ENCODE measurements at regions of chr2 and their contacts with region 1.

Region 1: DNA sequence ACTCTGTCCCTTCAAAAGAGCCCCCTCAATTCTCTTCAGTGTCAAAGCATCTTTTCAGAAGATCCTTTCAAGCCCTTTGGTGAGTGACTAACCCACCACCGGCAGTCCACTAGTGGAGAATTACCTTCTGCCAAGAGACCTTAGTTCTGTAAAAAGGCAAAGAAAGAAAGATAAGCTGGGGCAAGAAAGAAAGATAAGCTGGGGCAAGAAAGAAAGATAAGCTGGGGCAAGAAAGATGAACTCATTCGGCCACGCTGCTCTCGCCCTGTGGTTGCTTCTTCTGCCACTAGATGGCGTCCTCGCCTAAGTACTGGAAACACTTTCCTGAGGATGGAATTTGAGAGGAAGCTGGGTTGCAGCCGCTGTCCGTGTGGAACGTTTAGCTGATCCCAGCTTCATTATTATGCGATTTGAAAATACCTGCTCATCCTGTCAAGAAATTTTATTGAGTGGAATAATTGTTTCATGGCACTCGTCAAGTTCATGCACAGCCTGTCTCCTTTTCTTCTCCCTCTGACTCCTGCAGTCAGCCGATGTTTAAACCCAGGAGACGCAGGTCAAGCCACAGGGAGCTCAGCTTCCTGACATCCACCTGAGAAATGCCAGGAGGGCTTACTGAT is 17.3 kb upstream of the ANXA4 start:
- DNase-seq: no peak
- ATAC-seq: peak; percentile 98
- H3K4me3 ChIP-seq: peak overlapping the region; percentile 69; the same call in 1 of the 2 replicates
- H3K27ac ChIP-seq: no peak overlapping the region
- H3K4me1 ChIP-seq: no peaks in the 10 kb centered on the region; the same call in 1 of the 2 replicates
- H3K27me3 ChIP-seq: no peaks in the 10 kb centered on the region
- CTCF ChIP-seq: peak; percentile 81 to 85 (median 82)
- EP300 ChIP-seq: no peak
- POLR2A ChIP-seq: no peak
- RAD21 ChIP-seq: peak; percentile 94

Region 2: DNA sequence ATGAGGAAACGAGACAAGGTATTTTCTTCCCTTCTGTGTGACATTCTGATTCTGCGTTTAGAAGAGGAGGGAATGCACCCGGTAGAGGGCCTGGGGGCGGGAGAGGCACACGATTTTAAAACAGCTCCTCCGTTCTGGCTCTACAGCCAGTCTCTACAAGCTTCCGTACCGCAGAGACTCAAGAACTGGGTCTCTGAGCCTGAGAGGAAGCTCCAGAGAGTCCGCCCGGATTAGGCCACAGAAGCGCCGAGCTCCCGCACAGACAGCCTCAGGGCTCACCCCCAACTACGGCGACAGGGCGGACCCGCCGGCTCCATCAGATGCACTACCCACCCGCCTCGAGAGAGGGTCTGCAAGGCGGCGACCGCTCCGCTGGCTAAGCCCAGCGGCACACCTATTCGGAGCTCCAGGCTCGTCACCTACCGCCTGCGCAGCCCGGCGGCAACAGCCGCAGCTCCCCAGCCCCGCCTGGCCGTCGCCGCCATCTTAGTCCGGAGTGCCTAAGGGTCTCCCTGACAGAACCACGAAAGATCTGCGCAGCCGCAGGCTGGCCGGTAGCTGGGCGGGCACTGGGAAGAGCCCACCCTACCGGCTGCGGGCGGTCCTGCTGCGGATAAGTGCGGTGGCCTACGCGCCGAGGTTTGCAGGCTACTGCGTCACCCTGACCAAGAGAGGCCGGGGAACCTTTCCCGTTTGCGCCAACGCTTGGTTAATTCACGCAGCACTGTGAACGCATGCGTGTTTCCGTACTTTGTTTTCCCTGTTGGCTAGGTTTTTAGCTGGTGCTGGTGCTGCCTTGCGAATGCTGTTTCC is 287.5 kb before region 1 on chr2 and contains the start of gene NFU1:
- CTCF ChIA-PET with region 1: interaction called, 10 read pairs
- POLR2A ChIA-PET with region 1: no interaction called
- RAD21 ChIA-PET with region 1: no interaction called
- SMC1A ChIA-PET with region 1: no interaction called
- in situ Hi-C with region 1: no loop called
- intact Hi-C with region 1: no loop called
- DNase-seq: peak; percentile 79
- ATAC-seq: peak; percentile 97
- H3K4me3 ChIP-seq: peak within 1 kb of the TSS; percentile 76
- H3K27ac ChIP-seq: peak within 1 kb of the TSS; percentile 89
- H3K4me1 ChIP-seq: peaks cover 9% of the 10 kb centered on the region; the same call in 1 of the 2 replicates
- H3K27me3 ChIP-seq: no peaks in the 10 kb centered on the region
- CTCF ChIP-seq: peak; percentile 61 to 76 (median 63)
- EP300 ChIP-seq: peak; percentile 21 to 73; a peak in 2 of 4 replicates
- POLR2A ChIP-seq: peak; percentile 98
- RAD21 ChIP-seq: peak; percentile 24; the same call in 1 of the 2 replicates
- polyA plus RNA-seq, gene NFU1: 38.5 to 61.2 TPM

Region 3: GRCh38 chr2:69750246-69750645 is 25.6 kb after region 1 on chr2:
- CTCF ChIA-PET with region 1: interaction called, 15 read pairs
- POLR2A ChIA-PET with region 1: no interaction called
- RAD21 ChIA-PET with region 1: interaction called, 53 read pairs
- SMC1A ChIA-PET with region 1: interaction called, 62 read pairs
- in situ Hi-C with region 1: no loop called
- intact Hi-C with region 1: no loop called
- DNase-seq: no peak
- ATAC-seq: no peak
- H3K4me3 ChIP-seq: no peak overlapping the region
- H3K27ac ChIP-seq: no peak overlapping the region
- H3K4me1 ChIP-seq: peaks cover 7% of the 10 kb centered on the region
- H3K27me3 ChIP-seq: no peaks in the 10 kb centered on the region
- CTCF ChIP-seq: no peak
- EP300 ChIP-seq: no peak
- POLR2A ChIP-seq: no peak
- RAD21 ChIP-seq: no peak

Region 4: DNA sequence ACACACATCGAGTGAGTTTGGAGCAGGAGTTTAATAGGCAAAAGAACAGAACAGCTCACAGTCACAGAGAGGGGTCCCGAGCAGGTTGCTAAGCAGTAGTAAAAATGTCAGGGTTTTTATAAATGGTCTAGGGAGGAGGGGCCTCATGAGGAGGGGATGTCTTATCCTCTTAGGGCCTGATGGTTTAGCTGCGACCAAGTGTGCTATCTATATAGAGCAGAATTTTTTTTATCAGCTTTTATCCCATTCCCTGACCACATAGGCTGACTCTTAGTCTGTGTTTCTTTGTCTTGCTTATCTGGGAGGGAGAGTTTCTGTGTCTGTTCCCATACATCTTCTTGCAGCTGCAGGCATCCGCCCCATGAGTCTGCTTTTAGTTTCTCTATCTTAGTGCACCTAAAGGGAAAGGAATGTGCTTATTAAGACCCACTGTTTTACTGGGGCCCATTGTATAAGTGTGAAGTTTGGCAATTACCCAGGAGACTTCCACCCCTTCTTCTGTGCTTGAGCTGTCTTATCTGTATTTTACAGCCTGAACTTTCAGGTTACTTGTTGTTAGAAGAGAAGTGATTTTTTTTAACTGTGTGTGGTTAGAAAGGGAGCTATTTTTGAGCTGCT is 74.4 kb after region 1 on chr2:
- CTCF ChIA-PET with region 1: interaction called, 87 read pairs
- POLR2A ChIA-PET with region 1: interaction called, 3 read pairs
- RAD21 ChIA-PET with region 1: interaction called, 45 read pairs
- SMC1A ChIA-PET with region 1: interaction called, 29 read pairs
- in situ Hi-C with region 1: no loop called
- intact Hi-C with region 1: no loop called
- DNase-seq: no peak
- ATAC-seq: peak; percentile 68
- H3K4me3 ChIP-seq: peak overlapping the region; percentile 69
- H3K27ac ChIP-seq: peak overlapping the region; percentile 77
- H3K4me1 ChIP-seq: peaks cover 69% of the 10 kb centered on the region
- H3K27me3 ChIP-seq: no peaks in the 10 kb centered on the region
- CTCF ChIP-seq: no peak
- EP300 ChIP-seq: no peak
- POLR2A ChIP-seq: no peak
- RAD21 ChIP-seq: no peak

Region 5: GRCh38 chr2:69837533-69837932 is 112.9 kb after region 1 on chr2:
- CTCF ChIA-PET with region 1: interaction called, 32 read pairs
- POLR2A ChIA-PET with region 1: interaction called, 3 read pairs
- RAD21 ChIA-PET with region 1: interaction called, 23 read pairs
- SMC1A ChIA-PET with region 1: interaction called, 31 read pairs
- in situ Hi-C with region 1: no loop called
- intact Hi-C with region 1: loop called (anchors 5 kb)
- DNase-seq: no peak
- ATAC-seq: peak; percentile 68
- H3K4me3 ChIP-seq: 0 out of 2 replicates have a peak overlapping the region, but pooled peaks have one; percentile 25
- H3K27ac ChIP-seq: no peak overlapping the region
- H3K4me1 ChIP-seq: peaks cover 9% of the 10 kb centered on the region
- H3K27me3 ChIP-seq: no peaks in the 10 kb centered on the region
- CTCF ChIP-seq: no peak
- EP300 ChIP-seq: no peak
- POLR2A ChIP-seq: no peak
- RAD21 ChIP-seq: no peak

Region 6: GRCh38 chr2:69902213-69902922 is 177.7 kb after region 1 on chr2:
- CTCF ChIA-PET with region 1: interaction called, 15 read pairs
- POLR2A ChIA-PET with region 1: no interaction called
- RAD21 ChIA-PET with region 1: interaction called, 11 read pairs
- SMC1A ChIA-PET with region 1: interaction called, 10 read pairs
- in situ Hi-C with region 1: loop called (anchors 10 kb)
- intact Hi-C with region 1: no loop called
- DNase-seq: peak; percentile 21
- ATAC-seq: peak; percentile 67
- H3K4me3 ChIP-seq: peak overlapping the region; percentile 71
- H3K27ac ChIP-seq: peak overlapping the region; percentile 60
- H3K4me1 ChIP-seq: peaks cover 4% of the 10 kb centered on the region; the same call in 1 of the 2 replicates
- H3K27me3 ChIP-seq: no peaks in the 10 kb centered on the region
- CTCF ChIP-seq: no peak
- EP300 ChIP-seq: no peak
- POLR2A ChIP-seq: no peak
- RAD21 ChIP-seq: no peak

Region 7: GRCh38 chr2:70344195-70344594 is 619.5 kb after region 1 on chr2:
- CTCF ChIA-PET with region 1: no interaction called
- POLR2A ChIA-PET with region 1: no interaction called
- RAD21 ChIA-PET with region 1: no interaction called
- SMC1A ChIA-PET with region 1: no interaction called
- in situ Hi-C with region 1: no loop called
- intact Hi-C with region 1: no loop called
- DNase-seq: no peak
- ATAC-seq: no peak
- H3K4me3 ChIP-seq: no peak overlapping the region
- H3K27ac ChIP-seq: no peak overlapping the region
- H3K4me1 ChIP-seq: no peaks in the 10 kb centered on the region
- H3K27me3 ChIP-seq: 0 out of 4 replicates have a peak, but pooled peaks cover 0 to 3% of the 10 kb centered on the region in 2 experiments
- CTCF ChIP-seq: no peak
- EP300 ChIP-seq: no peak
- POLR2A ChIP-seq: no peak
- RAD21 ChIP-seq: no peak